Heart right ventricle (tissue), 16 donors: ENCODE measurements at regions of chr15 and their contacts with region 1.

Region 1: DNA sequence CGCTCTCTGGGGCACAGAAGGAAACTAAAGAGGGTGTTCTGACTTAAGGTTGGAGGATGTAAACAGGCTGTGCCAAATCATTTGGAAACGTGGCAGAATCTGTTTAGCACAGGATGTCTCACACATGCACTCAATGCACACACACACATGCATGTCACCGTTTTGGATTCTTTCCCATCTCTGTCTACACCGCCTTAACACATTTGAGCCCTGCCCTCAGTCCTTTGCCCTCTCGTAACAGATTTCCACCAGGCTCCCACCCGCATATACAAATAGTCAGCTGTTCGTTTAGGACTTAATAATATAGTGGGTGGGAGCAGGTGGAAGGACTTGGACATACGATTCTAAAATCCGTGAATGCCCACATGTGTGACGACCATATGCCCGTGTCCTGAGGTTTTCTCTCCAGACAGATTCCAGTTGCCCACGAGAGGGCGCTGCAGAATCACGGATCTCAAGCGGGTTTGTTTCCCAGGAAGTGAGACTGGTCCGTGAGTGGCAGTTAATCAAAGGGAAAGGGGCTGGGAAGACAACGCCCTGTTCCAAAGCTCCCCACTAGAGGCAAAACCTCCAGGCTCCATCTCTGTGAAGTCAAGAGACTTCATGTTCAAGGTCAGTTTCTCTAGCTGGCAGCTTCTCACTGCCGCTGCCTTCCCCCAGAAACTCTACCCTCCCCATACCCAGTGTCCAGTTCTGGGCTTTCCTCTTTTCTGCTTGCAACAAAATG is 44.5 kb downstream of the NOX5 start:
- DNase-seq: peak; percentile 89 to 90
- ATAC-seq: peak; percentile 77 to 96 (median 86)
- H3K4me3 ChIP-seq: peak overlapping the region in 3 of 10 donors; percentile 23 to 30 (median 29)
- H3K27ac ChIP-seq: peak overlapping the region in 8 of 10 donors; percentile 20 to 75 (median 68)
- H3K4me1 ChIP-seq: peaks cover 0 to 27% (median 23%) of the 10 kb centered on the region in 9 donors
- H3K27me3 ChIP-seq: peaks cover 0 to 10% (median 0%) of the 10 kb centered on the region in 7 donors
- CTCF ChIP-seq: peak; percentile 76 to 95 (median 90)

Region 2: DNA sequence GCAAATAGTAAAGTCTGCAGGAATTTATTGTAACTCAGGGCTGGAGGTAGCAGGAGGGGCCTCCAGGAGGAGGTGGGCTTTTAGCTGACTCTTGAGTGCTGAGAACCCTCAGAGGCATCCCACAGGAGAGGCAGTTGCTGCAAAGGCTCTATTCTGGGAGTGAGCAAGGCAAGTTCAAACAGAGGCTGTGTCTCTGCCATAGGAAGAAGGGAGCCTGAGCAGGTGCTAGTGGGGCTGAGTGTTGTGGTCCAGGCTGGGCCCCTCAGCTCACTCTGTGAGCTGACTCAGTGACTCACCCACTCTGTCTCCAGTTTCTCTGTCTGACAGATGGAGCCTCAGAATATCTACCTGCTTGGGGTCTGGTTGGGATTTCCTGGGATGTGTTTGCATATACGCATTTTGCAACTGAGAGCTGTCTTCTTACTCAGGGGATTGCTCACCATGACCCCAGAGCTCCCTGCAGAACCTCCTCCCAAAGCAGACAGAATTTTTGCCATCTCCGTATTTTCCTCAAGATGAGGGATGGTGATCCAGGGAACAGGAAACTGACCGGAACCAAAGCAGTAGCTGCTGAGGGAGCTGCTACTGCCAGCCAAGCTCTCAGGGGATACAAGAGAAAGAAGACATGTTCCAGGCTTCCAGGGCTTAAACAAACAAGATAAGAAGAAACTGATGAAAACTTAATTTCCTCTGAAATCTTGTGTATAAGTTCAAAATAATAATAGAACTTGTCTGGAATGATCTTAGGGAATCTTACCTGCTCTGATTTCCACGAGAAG is 58.1 kb before region 1 on chr15:
- intact Hi-C with region 1: no loop called
- DNase-seq: no peak
- ATAC-seq: peak in 1 of 8 donors; percentile 19
- H3K4me3 ChIP-seq: no peak overlapping the region
- H3K27ac ChIP-seq: no peak overlapping the region
- H3K4me1 ChIP-seq: peaks cover 0 to 35% (median 6%) of the 10 kb centered on the region in 9 donors
- H3K27me3 ChIP-seq: no peaks in the 10 kb centered on the region
- CTCF ChIP-seq: no peak

Region 3: GRCh38 chr15:69225355-69226025 is 166.5 kb after region 1 on chr15:
- intact Hi-C with region 1: loop called (anchors 1 to 10 kb)
- DNase-seq: no peak
- ATAC-seq: peak in 1 of 8 donors; percentile 42
- H3K4me3 ChIP-seq: no peak overlapping the region
- H3K27ac ChIP-seq: no peak overlapping the region
- H3K4me1 ChIP-seq: peaks cover 0 to 19% (median 0%) of the 10 kb centered on the region in 9 donors
- H3K27me3 ChIP-seq: no peaks in the 10 kb centered on the region
- CTCF ChIP-seq: peak in 8 of 9 donors; percentile 15 to 57 (median 38)

Region 4: DNA sequence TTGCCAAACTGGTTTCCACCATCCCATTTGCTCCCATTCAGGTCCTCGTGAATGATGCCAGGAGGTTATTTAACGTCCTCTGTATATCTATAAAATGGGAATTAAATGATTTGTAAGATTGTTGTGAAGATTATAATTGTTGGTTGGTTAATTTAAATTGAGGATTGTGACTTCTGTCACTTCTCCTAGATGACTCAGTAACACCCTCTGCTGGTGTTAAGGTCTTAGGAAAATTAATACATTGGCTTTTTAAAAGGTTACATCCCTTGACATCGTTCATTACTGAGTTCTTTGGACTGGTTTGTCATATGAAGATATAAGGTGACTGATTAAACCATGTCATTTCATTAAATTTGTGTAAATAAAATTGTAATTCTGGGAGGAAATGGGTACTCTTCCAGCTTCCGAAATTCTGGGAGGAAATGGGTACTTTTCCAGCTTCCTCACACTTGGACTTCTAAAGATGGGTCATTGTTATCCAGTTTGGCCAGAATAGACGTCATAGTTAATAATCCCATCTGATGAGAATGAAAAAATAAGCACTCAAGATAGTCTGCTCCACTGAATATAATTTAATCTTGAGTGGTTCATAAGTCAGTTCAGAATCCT is 206.5 kb after region 1 on chr15:
- intact Hi-C with region 1: loop called in 9 of 10 experiments (anchors 1 to 10 kb)
- DNase-seq: no peak
- ATAC-seq: no peak
- H3K4me3 ChIP-seq: no peak overlapping the region
- H3K27ac ChIP-seq: no peak overlapping the region
- H3K4me1 ChIP-seq: peaks cover 0 to 11% (median 0%) of the 10 kb centered on the region in 9 donors
- H3K27me3 ChIP-seq: no peaks in the 10 kb centered on the region
- CTCF ChIP-seq: peak; percentile 45 to 76 (median 67)

Region 5: GRCh38 chr15:69394556-69395282 is 335.7 kb after region 1 on chr15:
- intact Hi-C with region 1: loop called (anchors 1 to 5 kb)
- DNase-seq: peak; percentile 81 to 87
- ATAC-seq: peak; percentile 88 to 93 (median 91)
- H3K4me3 ChIP-seq: peak overlapping the region in 3 of 10 donors; percentile 10 to 24 (median 16)
- H3K27ac ChIP-seq: no peak overlapping the region
- H3K4me1 ChIP-seq: peaks cover 0 to 14% (median 9%) of the 10 kb centered on the region in 9 donors
- H3K27me3 ChIP-seq: peaks cover 0 to 13% (median 0%) of the 10 kb centered on the region in 7 donors
- CTCF ChIP-seq: peak; percentile 94 to 99 (median 97)

Region 6: GRCh38 chr15:69413822-69414700 is 355.1 kb after region 1 on chr15 and contains the start of gene KIF23:
- intact Hi-C with region 1: no loop called
- DNase-seq: peak; percentile 86 to 89
- ATAC-seq: peak; percentile 97 to 98 (median 98)
- H3K4me3 ChIP-seq: peak within 1 kb of the TSS; percentile 52 to 87 (median 72)
- H3K27ac ChIP-seq: peak within 1 kb of the TSS in 6 of 10 donors; percentile 24 to 68 (median 31)
- H3K4me1 ChIP-seq: peaks cover 0 to 12% (median 11%) of the 10 kb centered on the region in 9 donors
- H3K27me3 ChIP-seq: no peaks in the 10 kb centered on the region
- CTCF ChIP-seq: no peak
- total RNA-seq, gene KIF23: 0.17 to 3.4 (median 0.83) TPM